ENCODE measurements at regions of chr4 and their contacts with region 1.

Region 1: DNA sequence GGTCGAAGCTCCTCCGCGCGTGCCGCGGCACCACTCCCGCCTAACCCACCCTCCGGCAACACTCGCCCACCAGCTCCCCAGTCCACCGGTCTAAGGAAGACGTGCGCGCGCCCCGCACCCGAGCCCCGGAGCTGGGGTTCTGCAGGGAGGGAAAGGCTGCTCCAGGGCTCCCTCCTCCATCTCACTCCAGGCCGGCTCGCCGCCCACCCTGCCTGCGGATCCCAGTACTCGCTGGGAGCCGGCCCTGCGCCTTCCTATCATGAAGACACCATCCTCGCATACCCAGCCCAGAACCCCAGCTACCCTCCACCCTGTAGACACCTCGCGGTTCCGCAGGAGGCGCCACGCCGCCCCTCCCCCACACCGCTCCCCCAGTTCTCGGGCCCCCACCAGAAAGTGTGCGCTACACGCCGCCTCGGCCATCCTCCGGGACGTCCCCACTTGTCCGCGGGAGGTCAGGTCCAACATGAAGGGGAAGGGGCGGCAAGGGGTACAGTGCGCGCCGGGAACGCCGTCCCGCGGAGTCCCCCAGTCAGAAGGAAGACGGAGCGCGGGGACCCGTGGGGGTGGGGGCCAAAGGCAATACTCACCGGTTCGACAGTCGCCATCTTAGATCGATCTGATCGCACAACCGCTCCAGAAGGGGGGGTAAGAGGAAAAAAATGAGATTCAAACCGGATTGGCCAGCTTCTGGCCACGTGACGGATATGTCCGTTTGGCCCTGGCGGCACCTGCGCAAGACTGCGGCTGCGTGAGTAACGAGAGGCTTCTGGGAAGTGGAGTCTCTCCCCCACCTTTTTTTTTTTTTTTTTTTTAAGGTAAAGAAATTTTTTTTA is at the start of gene EIF4E:
- DNase-seq: peak; percentile 98
- H3K4me3 Mint-ChIP-seq: peak within 1 kb of the TSS; percentile 88
- H3K27ac Mint-ChIP-seq: peak within 1 kb of the TSS; percentile 99
- H3K4me1 Mint-ChIP-seq: peaks cover 35% of the 10 kb centered on the region
- H3K27me3 Mint-ChIP-seq: no peaks in the 10 kb centered on the region
- total RNA-seq, gene EIF4E: 121 to 124 TPM

Region 2: DNA sequence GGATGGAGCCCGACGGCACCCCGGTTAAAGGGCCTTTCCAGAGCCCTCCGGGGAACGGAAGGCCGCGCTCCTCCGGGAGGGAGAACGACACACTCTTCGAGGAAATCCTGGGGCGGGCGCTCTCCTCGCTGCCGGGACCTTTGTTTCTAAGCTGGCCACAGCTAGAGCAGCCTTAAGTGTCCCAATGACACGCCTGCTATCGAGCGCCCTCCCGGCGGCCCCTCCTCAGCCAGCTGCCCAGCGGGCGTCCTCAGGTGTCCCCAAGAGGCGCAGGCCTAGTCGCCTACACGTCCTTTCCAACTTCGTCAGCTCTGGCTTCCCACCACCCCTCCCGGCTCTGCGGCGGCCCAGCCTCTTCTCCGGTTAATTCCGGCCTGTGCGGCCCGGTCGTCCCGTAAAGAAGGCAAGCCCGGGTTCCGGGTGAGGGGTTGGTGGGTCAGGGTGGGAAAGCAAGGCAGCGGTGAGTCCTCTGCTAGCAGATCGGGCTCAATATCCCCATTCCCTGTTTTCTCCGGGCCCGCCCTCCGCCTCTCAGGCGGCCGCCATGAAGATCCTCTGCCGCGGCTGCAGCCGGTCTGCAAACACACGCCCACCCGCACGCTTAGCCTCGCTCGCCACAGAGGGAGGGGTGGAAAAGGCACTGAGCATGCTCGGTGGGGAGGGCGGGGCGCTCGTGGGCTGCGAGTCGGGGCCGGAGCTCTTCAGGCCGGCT is 668.0 kb before region 1 on chr4:
- CTCF ChIA-PET with region 1: no interaction called
- POLR2A ChIA-PET with region 1: interaction called, 19 read pairs
- intact Hi-C with region 1: loop called (anchors 1 kb)
- DNase-seq: peak; percentile 96
- H3K4me3 Mint-ChIP-seq: peak overlapping the region; percentile 95
- H3K27ac Mint-ChIP-seq: peak overlapping the region; percentile 97
- H3K4me1 Mint-ChIP-seq: peaks cover 43% of the 10 kb centered on the region
- H3K27me3 Mint-ChIP-seq: no peaks in the 10 kb centered on the region

Region 3: GRCh38 chr4:98510757-98511517 is 417.8 kb before region 1 on chr4:
- CTCF ChIA-PET with region 1: no interaction called
- POLR2A ChIA-PET with region 1: no interaction called
- intact Hi-C with region 1: loop called (anchors 1 kb)
- DNase-seq: peak; percentile 69
- H3K4me3 Mint-ChIP-seq: no peak overlapping the region
- H3K27ac Mint-ChIP-seq: peak overlapping the region; percentile 24
- H3K4me1 Mint-ChIP-seq: peaks cover 55% of the 10 kb centered on the region
- H3K27me3 Mint-ChIP-seq: no peaks in the 10 kb centered on the region

Region 4: GRCh38 chr4:98688411-98689290 is 240.1 kb before region 1 on chr4:
- CTCF ChIA-PET with region 1: interaction called, 3 read pairs
- POLR2A ChIA-PET with region 1: interaction called, 7 read pairs
- intact Hi-C with region 1: loop called (anchors 2 kb)
- DNase-seq: peak; percentile 63
- H3K4me3 Mint-ChIP-seq: no peak overlapping the region
- H3K27ac Mint-ChIP-seq: peak overlapping the region; percentile 72
- H3K4me1 Mint-ChIP-seq: peaks cover 45% of the 10 kb centered on the region
- H3K27me3 Mint-ChIP-seq: no peaks in the 10 kb centered on the region

Region 5: GRCh38 chr4:99088481-99089365 is 160.0 kb after region 1 on chr4 and contains the start of gene ADH5:
- CTCF ChIA-PET with region 1: no interaction called
- POLR2A ChIA-PET with region 1: interaction called, 24 read pairs
- intact Hi-C with region 1: loop called (anchors 2 kb)
- DNase-seq: peak; percentile 95
- H3K4me3 Mint-ChIP-seq: peak within 1 kb of the TSS; percentile 96
- H3K27ac Mint-ChIP-seq: peak within 1 kb of the TSS; percentile 93
- H3K4me1 Mint-ChIP-seq: peaks cover 37% of the 10 kb centered on the region
- H3K27me3 Mint-ChIP-seq: no peaks in the 10 kb centered on the region
- total RNA-seq, gene ADH5: 112 to 119 TPM

Region 6: GRCh38 chr4:99847362-99847976 is 918.7 kb after region 1 on chr4:
- CTCF ChIA-PET with region 1: no interaction called
- POLR2A ChIA-PET with region 1: no interaction called
- intact Hi-C with region 1: loop called (anchors 2 kb)
- DNase-seq: peak; percentile 47
- H3K4me3 Mint-ChIP-seq: peak overlapping the region; percentile 59
- H3K27ac Mint-ChIP-seq: peak overlapping the region; percentile 95
- H3K4me1 Mint-ChIP-seq: peaks cover 74% of the 10 kb centered on the region
- H3K27me3 Mint-ChIP-seq: no peaks in the 10 kb centered on the region

Measured in activated CD4-positive, alpha-beta memory T cell treated with anti-CD3 and anti-CD28 coated beads for 36 hours (primary cell).